Pancreas (tissue), 10 donors: ENCODE measurements at regions of chr2 and their contacts with region 1.

Region 1: DNA sequence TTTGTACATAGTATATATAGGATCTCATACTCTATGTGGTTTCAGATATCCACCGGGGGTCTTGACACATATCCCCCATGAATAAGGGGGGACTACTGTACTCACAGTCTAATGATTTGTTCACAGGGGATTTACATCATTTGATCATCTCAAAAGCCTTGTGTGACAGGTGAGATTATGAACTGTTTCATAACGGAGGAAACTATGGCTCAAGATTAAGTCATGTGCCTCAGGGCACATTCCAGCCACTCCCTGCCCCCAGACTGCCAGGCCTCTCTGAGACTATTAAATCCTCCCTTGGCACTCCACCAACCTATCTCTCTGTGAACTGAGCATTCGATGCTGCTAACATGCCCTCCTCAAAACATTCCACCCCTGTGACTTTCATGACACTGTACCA is 169.4 kb downstream of the KCNS3 start:
- DNase-seq: no peak
- ATAC-seq: peak in 3 of 4 donors; percentile 23 to 55 (median 53)
- H3K4me3 ChIP-seq: no peak overlapping the region
- H3K27ac ChIP-seq: no peak overlapping the region
- H3K4me1 ChIP-seq: no peaks in the 10 kb centered on the region
- H3K27me3 ChIP-seq: no peaks in the 10 kb centered on the region
- CTCF ChIP-seq: no peak

Region 2: DNA sequence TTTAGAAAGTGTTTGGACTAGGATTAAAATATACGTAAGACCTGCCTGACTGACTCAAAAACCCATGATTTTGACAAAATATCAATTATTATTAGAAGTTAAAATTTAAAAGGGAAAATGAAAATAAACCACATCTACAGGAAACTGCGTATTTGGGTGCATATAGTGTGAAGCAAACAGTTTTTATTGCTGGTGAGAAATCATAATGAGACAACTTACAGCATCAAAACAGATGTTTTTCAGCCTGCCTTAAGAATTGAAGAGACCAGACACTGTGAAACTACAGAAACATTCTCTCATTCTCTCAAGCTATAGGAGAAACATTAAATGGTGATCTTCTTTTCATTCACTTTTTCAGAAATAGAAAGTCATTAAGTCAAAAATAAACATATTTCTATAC is 592.5 kb before region 1 on chr2:
- intact Hi-C with region 1: no loop called
- DNase-seq: no peak
- ATAC-seq: no peak
- H3K4me3 ChIP-seq: no peak overlapping the region
- H3K27ac ChIP-seq: no peak overlapping the region
- H3K4me1 ChIP-seq: no peaks in the 10 kb centered on the region
- H3K27me3 ChIP-seq: no peaks in the 10 kb centered on the region
- CTCF ChIP-seq: no peak

Region 3: DNA sequence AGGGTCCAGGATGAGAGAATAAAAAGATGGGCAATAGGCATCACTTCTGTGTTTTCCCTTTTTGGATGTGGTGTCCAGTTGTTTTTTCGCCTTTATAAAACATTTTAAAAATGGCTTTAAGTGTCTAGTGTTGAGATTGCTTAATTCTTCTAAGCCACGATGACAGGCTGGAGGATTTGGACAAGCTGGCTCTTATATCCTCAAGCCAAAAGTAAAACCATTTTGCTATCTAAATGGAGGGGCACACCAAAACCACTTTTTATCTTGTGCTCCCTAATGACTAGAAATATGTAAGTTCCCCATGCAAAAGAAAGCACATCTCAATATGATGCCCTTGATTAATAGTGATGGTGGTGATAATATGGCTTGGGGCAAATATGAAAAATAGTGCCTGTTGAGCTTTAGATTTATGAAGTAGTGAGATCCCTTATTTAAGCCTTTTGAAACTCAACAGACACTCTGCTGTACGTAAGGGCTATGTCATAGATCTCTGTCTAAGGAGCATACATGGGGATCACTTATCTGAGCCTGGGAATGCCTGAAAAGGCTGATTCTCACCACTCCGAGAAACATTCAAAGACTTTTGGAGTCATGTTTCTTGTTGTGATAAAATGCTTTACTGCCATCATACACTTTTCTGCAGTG is 16.1 kb after region 1 on chr2:
- intact Hi-C with region 1: loop called in 1 of 3 experiments (anchors 2 kb)
- DNase-seq: no peak
- ATAC-seq: no peak
- H3K4me3 ChIP-seq: no peak overlapping the region
- H3K27ac ChIP-seq: no peak overlapping the region
- H3K4me1 ChIP-seq: no peaks in the 10 kb centered on the region
- H3K27me3 ChIP-seq: no peaks in the 10 kb centered on the region
- CTCF ChIP-seq: no peak